ENCODE measurements at regions of chr14 and their contacts with region 1.

Region 1: DNA sequence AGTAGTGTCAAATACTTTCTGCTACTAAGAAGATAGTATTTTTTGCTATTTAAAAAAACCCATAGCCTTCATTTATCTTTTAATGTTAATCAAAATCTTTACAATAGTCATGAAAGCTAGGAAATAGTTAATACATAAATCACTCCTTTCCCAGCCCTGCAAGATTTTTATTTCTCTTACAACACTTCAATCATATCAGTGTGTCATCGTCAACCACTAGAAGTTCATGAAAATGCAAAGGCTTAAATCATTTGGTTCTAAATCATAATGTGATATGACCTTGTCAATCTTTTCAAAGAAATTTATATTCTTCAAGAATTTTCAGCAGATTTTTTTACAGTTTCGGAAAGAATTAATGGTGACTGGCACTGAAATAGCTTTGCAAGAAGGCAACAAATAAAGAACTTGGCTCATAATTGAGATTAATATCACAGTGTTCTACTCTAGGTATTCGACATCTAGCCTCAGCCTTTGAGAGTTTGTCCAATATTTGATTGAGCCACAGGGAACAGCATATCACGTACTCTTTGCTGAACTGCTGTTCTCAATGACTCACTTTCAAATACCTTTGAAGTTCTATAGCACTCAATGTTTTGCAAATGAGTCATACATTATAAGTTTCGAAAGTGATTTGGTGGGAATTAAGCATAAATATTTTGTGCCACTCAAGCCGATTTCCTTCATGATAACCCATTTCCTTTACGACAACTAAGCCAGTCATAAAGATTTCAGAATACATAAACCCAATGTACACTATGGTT is 383.9 kb upstream of the FOXG1 start:
- DNase-seq: peak; percentile 71
- H3K4me3 ChIP-seq: no peak overlapping the region
- H3K27ac ChIP-seq: peak overlapping the region; percentile 68
- H3K4me1 ChIP-seq: peaks cover 26% of the 10 kb centered on the region
- H3K27me3 ChIP-seq: no peaks in the 10 kb centered on the region
- CTCF ChIP-seq: no peak
- POLR2A ChIP-seq: no peak

Region 2: GRCh38 chr14:28308734-28309133 is 73.9 kb before region 1 on chr14:
- CTCF ChIA-PET with region 1: no interaction called
- POLR2A ChIA-PET with region 1: no interaction called
- dilution Hi-C with region 1: no loop called
- intact Hi-C with region 1: loop called (anchors 2 kb)
- DNase-seq: peak; percentile 60
- H3K4me3 ChIP-seq: no peak overlapping the region
- H3K27ac ChIP-seq: peak overlapping the region; percentile 62
- H3K4me1 ChIP-seq: peaks cover 23% of the 10 kb centered on the region
- H3K27me3 ChIP-seq: no peaks in the 10 kb centered on the region
- CTCF ChIP-seq: no peak
- POLR2A ChIP-seq: no peak

Region 3: DNA sequence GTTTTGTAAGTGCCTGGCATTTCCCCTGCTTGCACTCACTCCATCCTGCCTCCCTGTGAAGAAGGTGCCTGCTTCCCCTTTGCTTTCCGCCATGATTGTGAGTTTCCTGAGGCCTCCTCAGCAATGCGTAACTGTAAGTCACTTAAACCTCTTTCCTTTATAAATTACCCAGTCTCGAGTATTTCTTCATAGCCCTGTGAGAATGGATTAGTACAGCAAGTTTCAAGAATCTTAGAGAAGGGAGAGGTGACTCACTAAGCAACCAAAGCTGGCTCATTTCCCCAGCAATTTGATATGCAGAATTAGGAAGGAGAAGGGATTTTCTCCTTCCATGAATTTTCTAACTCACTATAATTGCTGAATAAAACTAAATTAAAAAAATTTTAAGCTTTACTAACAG is 132.9 kb after region 1 on chr14:
- CTCF ChIA-PET with region 1: no interaction called
- POLR2A ChIA-PET with region 1: no interaction called
- dilution Hi-C with region 1: no loop called
- intact Hi-C with region 1: loop called (anchors 2 kb)
- DNase-seq: peak; percentile 23
- H3K4me3 ChIP-seq: no peak overlapping the region
- H3K27ac ChIP-seq: peak overlapping the region; percentile 29
- H3K4me1 ChIP-seq: no peaks in the 10 kb centered on the region
- H3K27me3 ChIP-seq: no peaks in the 10 kb centered on the region
- CTCF ChIP-seq: no peak
- POLR2A ChIP-seq: no peak

Region 4: GRCh38 chr14:28577711-28578131 is 195.1 kb after region 1 on chr14:
- CTCF ChIA-PET with region 1: no interaction called
- POLR2A ChIA-PET with region 1: no interaction called
- dilution Hi-C with region 1: no loop called
- intact Hi-C with region 1: loop called (anchors 1 kb)
- DNase-seq: peak; percentile 12
- H3K4me3 ChIP-seq: no peak overlapping the region
- H3K27ac ChIP-seq: peak overlapping the region; percentile 21
- H3K4me1 ChIP-seq: peaks cover 3% of the 10 kb centered on the region
- H3K27me3 ChIP-seq: no peaks in the 10 kb centered on the region
- CTCF ChIP-seq: no peak
- POLR2A ChIP-seq: no peak